PC-9 (cell line): ENCODE measurements at regions of chr1 and their contacts with region 1.

Region 1: GRCh38 chr1:70061231-70061630 is 144.1 kb downstream of the LRRC40 start:
- DNase-seq: no peak
- H3K4me3 ChIP-seq: no peak overlapping the region
- H3K27ac ChIP-seq: no peak overlapping the region
- H3K4me1 ChIP-seq: no peaks in the 10 kb centered on the region
- H3K27me3 ChIP-seq: no peaks in the 10 kb centered on the region
- CTCF ChIP-seq: no peak

Region 2: GRCh38 chr1:70072231-70072751 is 11.1 kb after region 1 on chr1:
- CTCF ChIA-PET with region 1: no interaction called
- POLR2A ChIA-PET with region 1: interaction called, 11 read pairs
- intact Hi-C with region 1: no loop called
- DNase-seq: no peak
- H3K4me3 ChIP-seq: no peak overlapping the region
- H3K27ac ChIP-seq: no peak overlapping the region
- H3K4me1 ChIP-seq: no peaks in the 10 kb centered on the region
- H3K27me3 ChIP-seq: no peaks in the 10 kb centered on the region
- CTCF ChIP-seq: no peak

Region 3: GRCh38 chr1:70142075-70142474 is 80.8 kb after region 1 on chr1:
- CTCF ChIA-PET with region 1: no interaction called
- POLR2A ChIA-PET with region 1: no interaction called
- intact Hi-C with region 1: no loop called
- DNase-seq: no peak
- H3K4me3 ChIP-seq: no peak overlapping the region
- H3K27ac ChIP-seq: no peak overlapping the region
- H3K4me1 ChIP-seq: peaks cover 8% of the 10 kb centered on the region; the same call in 1 of the 2 replicates
- H3K27me3 ChIP-seq: no peaks in the 10 kb centered on the region
- CTCF ChIP-seq: no peak